Esophagus muscularis mucosa (tissue), 4 donors: ENCODE measurements at regions of chr19 and their contacts with region 1.

Region 1: GRCh38 chr19:18675779-18676178 is 7.7 kb upstream of the CRTC1 start:
- DNase-seq: no peak
- H3K4me3 ChIP-seq: no peak overlapping the region
- H3K27ac ChIP-seq: no peak overlapping the region
- H3K4me1 ChIP-seq: peaks cover 29 to 72% (median 60%) of the 10 kb centered on the region in 4 donors
- H3K27me3 ChIP-seq: no peaks in the 10 kb centered on the region
- CTCF ChIP-seq: peak in 2 of 3 experiments; percentile 21 to 35
- EP300 ChIP-seq: no peak
- POLR2A ChIP-seq: no peak

Region 2: DNA sequence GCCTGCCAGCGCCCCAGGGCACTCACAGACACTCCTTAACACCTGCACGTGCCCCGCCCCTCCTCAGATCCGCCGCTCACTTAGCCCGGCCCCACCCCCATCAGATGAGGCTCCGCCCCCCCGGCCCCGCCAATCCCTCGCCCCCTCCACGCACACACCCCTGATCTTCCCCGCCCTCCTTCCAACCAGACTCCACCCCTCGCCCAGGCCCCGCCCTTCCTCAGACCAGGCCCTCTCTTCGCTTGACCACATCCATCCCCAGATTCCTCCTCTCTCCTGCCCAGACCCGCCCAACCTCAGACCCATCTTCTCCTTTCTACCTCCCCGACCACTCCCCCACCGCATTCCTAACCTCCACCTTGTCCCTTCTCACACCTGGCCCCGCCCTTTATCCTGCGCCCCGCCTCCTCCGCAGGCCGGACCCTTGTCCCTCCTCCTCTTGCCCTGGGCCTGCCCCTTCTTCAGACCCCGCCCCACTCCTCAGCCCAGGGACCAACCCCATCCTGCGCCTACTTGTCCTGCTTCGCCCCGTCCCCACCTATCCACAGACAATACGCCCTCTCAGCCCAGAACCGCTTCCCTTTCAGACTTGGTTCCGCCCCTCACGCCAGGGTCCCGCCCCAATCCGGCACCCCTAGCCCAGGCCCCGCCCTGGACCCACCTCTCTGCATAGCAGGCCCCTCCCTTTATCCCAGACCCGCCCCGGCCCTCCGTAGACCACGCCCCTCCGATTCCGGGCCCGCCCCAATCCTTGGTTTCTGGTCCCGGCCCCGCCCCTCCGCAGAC is 39.4 kb before region 1 on chr19:
- intact Hi-C with region 1: loop called (anchors 5 kb)
- DNase-seq: peak; percentile 100
- H3K4me3 ChIP-seq: peak overlapping the region; percentile 79 to 93 (median 86)
- H3K27ac ChIP-seq: peak overlapping the region; percentile 85 to 90 (median 88)
- H3K4me1 ChIP-seq: peaks cover 17 to 45% (median 43%) of the 10 kb centered on the region in 4 donors
- H3K27me3 ChIP-seq: no peaks in the 10 kb centered on the region
- CTCF ChIP-seq: peak in 1 of 3 experiments; percentile 6
- EP300 ChIP-seq: no peak
- POLR2A ChIP-seq: no peak